ENCODE measurements at regions of chr2 and their contacts with region 1.

Region 1: GRCh38 chr2:201774546-201774945 is 6.2 kb downstream of the ALS2 start:
- DNase-seq: peak in 1 of 3 donors; percentile 35
- H3K4me3 ChIP-seq: peak overlapping the region in 1 of 7 experiments; percentile 20
- H3K27ac ChIP-seq: peak overlapping the region in 1 of 2 experiments; percentile 12
- H3K4me1 ChIP-seq: peaks cover 10 to 89% (median 54%) of the 10 kb centered on the region in 4 experiments
- H3K27me3 ChIP-seq: no peaks in the 10 kb centered on the region

Region 2: GRCh38 chr2:200966770-200967169 is 807.8 kb before region 1 on chr2:
- CTCF ChIA-PET with region 1: no interaction called
- POLR2A ChIA-PET with region 1: no interaction called
- DNase-seq: no peak
- H3K4me3 ChIP-seq: no peak overlapping the region
- H3K27ac ChIP-seq: no peak overlapping the region
- H3K4me1 ChIP-seq: peaks cover 9 to 22% (median 16%) of the 10 kb centered on the region in 4 experiments
- H3K27me3 ChIP-seq: no peaks in the 10 kb centered on the region

Region 3: DNA sequence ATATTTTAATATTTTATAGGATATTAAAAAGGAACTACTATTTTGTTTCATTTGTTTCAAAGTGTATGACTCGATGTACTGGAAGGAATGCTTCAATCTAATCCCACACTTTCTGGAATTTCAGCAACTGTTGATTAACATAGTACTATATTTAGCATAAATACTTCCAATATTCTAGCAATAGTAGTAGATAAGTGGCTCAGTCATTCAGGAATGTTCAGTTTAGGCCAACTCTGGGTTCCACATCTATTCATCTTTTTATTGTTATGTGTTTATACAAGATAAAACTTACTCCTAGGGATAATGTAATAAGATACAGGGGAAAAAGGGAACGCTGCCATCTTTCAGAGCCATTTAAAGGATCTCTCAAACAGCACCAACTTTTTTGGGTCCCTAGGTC is 788.7 kb before region 1 on chr2:
- CTCF ChIA-PET with region 1: no interaction called
- POLR2A ChIA-PET with region 1: no interaction called
- DNase-seq: no peak
- H3K4me3 ChIP-seq: no peak overlapping the region
- H3K27ac ChIP-seq: no peak overlapping the region
- H3K4me1 ChIP-seq: no peaks in the 10 kb centered on the region
- H3K27me3 ChIP-seq: no peaks in the 10 kb centered on the region

Region 4: GRCh38 chr2:201786471-201786870 is 11.9 kb after region 1 on chr2:
- CTCF ChIA-PET with region 1: interaction called, 15 read pairs
- POLR2A ChIA-PET with region 1: interaction called, 3 read pairs
- DNase-seq: no peak
- H3K4me3 ChIP-seq: no peak overlapping the region
- H3K27ac ChIP-seq: no peak overlapping the region
- H3K4me1 ChIP-seq: peaks cover 12 to 59% (median 45%) of the 10 kb centered on the region in 4 experiments
- H3K27me3 ChIP-seq: no peaks in the 10 kb centered on the region

Region 5: DNA sequence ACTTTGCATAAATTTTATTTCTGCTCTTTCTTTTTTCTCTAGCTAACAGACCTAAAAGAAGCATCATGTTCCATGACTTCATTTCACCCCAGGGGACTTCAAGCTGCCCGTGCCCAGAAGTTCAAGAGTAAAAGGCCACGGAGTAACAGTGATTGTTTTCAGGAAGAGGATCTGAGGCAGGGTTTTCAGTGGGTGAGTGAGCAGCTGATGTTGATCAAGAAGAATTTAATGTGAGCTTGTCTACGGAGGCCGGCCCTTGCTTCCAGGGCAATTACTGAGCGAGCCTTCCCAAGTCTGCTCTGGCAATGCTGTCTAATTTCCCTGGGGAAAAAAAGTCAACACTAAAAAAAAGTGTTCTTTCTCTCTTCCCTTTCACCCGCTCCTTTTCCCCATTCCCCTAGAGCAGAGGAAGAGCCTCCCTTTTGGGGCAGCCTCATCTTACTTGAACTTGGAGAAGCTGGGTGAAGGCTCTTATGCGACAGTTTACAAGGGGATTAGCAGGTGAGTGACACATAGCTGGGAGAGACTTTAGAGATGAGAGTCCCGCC is 33.0 kb after region 1 on chr2:
- CTCF ChIA-PET with region 1: no interaction called
- POLR2A ChIA-PET with region 1: no interaction called
- DNase-seq: no peak
- H3K4me3 ChIP-seq: no peak overlapping the region
- H3K27ac ChIP-seq: no peak overlapping the region
- H3K4me1 ChIP-seq: no peaks in the 10 kb centered on the region
- H3K27me3 ChIP-seq: no peaks in the 10 kb centered on the region

Region 6: DNA sequence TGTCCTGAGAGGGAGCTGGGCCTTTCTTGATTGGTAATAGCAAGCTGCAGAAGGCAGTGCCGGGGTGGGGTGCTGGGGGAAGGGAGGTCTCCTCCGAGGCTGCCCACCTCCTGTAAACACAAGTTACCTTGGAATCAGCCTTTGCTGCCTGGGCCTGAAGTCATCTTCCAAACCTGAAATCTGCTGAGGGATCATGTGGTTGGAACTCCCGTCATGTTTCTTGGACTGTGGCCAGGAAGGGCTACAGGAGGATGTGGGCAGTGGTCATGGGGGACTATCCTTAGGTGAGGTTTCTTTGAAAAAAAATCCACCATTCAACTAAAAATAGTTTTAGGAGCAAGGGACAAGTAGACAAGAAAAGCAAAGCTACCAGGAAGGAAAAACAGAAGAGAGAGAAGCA is 106.0 kb after region 1 on chr2:
- CTCF ChIA-PET with region 1: no interaction called
- POLR2A ChIA-PET with region 1: no interaction called
- DNase-seq: peak; percentile 75 to 89 (median 89)
- H3K4me3 ChIP-seq: peak overlapping the region in 1 of 7 experiments; percentile 19
- H3K27ac ChIP-seq: no peak overlapping the region
- H3K4me1 ChIP-seq: peaks cover 6 to 49% (median 38%) of the 10 kb centered on the region in 4 experiments
- H3K27me3 ChIP-seq: no peaks in the 10 kb centered on the region

Measured in common myeloid progenitor, CD34-positive (primary cell).